GM10248 (cell line): ENCODE measurements at regions of chr11 and their contacts with region 1.

Region 1: DNA sequence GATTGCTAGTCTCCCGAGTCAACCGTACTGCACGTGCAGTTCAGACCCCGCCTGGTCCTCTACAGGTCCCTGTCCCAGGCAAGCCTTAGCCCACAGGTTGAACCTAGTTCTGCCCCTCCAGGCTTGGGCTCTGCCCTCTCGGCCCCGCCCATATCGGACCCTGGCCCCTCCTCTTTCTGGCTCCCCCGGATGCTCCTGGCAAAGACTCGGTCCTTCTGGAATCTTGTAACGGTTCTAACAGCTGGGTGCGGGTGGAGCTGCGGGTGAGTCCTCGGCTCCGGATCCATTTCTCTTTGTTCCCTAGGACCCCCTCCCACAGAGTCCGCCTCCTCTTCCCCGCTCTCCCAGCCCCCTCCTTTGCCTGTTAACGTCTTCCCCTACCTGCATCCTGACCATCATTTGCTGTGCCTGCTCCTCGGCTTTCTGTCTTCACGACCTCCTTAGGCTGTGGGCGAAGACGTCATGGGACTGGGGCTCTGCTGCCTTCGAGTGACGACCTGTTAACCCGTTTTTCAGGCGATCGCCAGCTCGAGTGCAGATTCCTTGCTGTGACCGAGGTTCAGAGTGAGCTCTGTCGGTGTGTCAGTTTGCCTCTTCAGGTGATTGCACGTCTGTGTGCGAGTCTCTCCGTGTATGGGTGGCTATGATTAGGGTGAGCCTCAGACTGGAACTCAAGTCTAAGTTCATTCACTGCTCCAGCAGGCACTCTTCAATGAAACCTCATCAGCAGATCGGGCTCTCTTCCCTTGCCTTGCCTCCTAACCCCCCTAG is at the start of gene DNHD1:
- DNase-seq: no peak
- CTCF ChIP-seq: no peak

Region 2: DNA sequence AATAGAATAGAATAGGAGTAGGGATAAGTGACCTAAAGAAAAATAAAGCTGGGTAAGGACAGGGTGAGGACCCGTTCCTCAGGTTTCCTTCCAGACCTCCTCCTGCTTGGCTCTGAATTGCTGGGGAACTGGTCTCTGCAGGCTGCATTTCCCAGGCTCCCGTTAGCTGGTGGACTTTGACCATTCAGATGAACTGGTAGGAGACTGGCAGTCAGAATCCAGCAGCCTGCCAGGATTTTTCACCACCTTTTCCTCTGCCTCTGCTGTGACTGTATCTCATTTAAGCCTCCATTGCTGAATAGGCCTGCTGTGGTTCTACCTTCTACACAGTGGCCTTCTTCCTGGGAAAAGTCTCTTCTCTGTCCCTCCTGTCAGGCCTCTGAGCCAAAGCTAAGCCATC is 131.6 kb before region 1 on chr11:
- CTCF ChIA-PET with region 1: no interaction called
- POLR2A ChIA-PET with region 1: no interaction called
- DNase-seq: no peak
- CTCF ChIP-seq: no peak

Region 3: DNA sequence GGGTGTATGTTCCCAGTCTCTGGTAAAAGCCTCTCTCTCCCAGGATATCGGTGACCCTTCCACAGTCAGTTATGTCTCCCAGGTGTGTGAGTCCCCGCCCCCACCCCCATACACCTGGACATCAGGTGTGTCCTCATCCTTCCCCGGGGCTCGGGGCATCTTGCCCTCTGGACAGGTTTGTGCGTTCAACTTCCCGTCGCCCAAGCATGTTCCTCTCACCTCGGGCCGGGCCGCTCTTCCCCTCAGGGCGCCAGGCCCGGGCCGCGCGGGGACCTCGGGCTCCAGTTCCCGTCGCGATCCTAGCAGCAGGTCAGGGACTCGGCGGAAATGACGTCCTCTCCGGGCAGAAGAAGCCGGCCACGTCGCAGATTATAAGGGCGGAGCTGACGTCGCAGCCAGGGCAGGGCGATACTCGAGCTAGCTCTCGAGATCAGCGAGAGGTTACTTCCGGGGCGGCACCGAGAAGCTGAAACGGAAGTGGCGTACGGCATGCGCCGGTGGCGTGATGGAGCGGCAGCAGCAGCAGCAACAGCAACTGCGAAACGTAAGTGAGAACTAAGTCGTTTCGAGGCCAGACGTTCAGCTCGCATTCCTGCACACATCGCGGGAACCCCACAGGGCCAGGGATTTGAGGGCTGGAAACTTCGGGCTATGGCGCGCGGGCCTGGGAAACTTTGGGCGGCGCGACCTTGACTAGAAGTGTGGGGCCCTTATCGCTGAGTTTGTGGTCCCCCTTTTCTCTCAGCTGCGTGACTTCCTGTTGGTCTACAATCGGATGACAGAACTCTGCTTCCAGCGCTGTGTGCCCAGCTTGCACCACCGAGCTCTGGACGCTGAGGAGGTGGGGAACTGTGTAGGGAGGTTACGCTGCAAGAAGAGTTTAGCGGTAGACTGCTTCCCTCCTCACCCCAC is 16.0 kb before region 1 on chr11 and contains the starts of genes ARFIP2 and TIMM10B:
- CTCF ChIA-PET with region 1: interaction called, 14 read pairs
- POLR2A ChIA-PET with region 1: no interaction called
- DNase-seq: peak; percentile 99
- CTCF ChIP-seq: no peak